ENCODE measurements at regions of chr10 and their contacts with region 1.

Region 1: GRCh38 chr10:120824881-120825309 is 26.3 kb upstream of the WDR11 start:
- H3K4me3 ChIP-seq: no peak overlapping the region
- H3K27ac ChIP-seq: no peak overlapping the region
- H3K4me1 ChIP-seq: no peaks in the 10 kb centered on the region
- CTCF ChIP-seq: 0 out of 2 replicates have a peak, but pooled peaks have one; percentile 19

Region 2: DNA sequence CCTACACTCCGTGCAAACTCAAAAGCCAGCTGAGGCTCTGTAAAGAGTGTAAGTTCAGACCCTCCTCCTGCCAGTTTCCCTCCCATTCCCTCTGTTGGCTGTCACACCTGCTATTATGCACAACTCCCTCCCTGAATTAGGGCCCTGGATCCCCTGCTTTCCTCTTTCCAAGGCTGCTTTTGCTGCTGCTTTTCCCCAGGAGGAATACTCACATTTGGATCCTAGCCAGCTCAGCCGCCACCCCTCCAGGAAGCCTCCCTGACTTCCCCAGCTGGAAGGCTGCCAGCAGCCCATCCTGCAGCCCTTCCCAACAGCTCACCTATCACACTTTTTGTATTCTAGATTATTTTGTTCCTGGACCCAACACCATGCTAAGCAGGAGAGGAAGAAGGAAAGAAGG is 14.6 kb before region 1 on chr10:
- CTCF ChIA-PET with region 1: interaction called, 14 read pairs
- POLR2A ChIA-PET with region 1: no interaction called
- H3K4me3 ChIP-seq: no peak overlapping the region
- H3K27ac ChIP-seq: no peak overlapping the region
- H3K4me1 ChIP-seq: peaks cover 5% of the 10 kb centered on the region; the same call in 1 of the 2 replicates
- CTCF ChIP-seq: no peak

Measured in HEK293 (cell line).